ENCODE measurements at regions of chr17 and their contacts with region 1.

Region 1: DNA sequence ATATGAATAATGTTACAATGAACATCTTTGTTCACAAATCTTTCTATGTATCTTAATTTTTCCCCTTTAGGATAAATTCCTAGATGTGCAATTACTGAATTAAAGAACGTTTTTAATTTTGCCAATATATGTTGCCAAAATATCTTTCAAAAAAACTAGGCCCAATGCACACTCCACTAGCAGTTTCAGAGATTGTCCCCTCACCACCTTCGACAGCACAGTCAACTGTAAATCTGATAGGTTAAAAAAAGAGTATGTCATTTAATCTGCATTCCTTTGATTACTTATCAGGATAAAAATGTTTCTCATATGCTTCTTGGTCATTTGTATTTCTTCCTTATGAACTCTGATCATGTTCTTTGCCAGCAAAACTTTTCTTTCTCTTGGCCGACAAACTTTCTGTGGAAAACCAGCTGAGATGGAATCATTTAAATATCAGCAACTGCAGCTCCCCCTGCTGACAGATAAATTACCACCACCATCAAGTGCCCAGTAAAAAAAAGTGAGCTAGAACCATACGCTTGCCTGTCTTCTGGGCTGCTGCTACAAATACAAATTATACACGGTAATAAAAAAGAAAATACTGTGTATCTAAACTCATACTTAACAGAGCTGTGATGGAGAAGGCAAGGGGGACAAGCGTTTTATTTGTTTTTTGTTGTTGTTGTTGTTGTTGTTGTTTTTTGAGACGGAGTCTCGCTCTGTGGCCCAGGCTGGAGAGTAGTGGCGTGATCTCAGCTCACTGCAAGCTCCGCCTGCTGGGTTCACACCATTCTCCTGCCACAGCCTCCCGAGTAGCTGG is 19.6 kb upstream of the KANSL1 start:
- DNase-seq: peak; percentile 71
- ATAC-seq: peak; percentile 87
- H3K4me3 Mint-ChIP-seq: no peak overlapping the region
- H3K27ac Mint-ChIP-seq: no peak overlapping the region
- H3K4me1 Mint-ChIP-seq: peaks cover 17% of the 10 kb centered on the region
- H3K27me3 Mint-ChIP-seq: no peaks in the 10 kb centered on the region

Region 2: DNA sequence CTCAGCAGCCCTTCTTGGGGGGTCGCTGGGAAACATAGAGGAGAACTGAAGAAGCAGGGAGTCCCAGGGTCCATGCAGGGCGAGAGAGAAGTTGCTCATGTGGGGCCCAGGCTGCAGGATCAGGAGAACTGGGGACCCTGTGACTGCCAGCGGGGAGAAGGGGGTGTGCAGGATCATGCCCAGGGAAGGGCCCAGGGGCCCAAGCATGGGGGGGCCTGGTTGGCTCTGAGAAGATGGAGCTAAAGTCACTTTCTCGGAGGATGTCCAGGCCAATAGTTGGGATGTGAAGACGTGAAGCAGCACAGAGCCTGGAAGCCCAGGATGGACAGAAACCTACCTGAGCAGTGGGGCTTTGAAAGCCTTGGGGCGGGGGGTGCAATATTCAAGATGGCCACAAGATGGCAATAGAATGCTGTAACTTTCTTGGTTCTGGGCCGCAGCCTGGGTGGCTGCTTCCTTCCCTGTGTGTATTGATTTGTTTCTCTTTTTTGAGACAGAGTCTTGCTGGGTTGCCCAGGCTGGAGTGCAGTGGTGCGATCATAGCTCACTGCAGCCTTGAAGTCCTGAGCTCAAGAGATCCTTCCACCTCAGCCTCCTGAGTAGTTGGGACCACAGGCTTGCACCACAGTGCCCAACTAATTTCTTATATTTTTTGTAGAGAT is 210.4 kb before region 1 on chr17:
- CTCF ChIA-PET with region 1: interaction called, 24 read pairs
- DNase-seq: peak; percentile 80
- ATAC-seq: peak; percentile 94
- H3K4me3 Mint-ChIP-seq: no peak overlapping the region
- H3K27ac Mint-ChIP-seq: no peak overlapping the region
- H3K4me1 Mint-ChIP-seq: peaks cover 3% of the 10 kb centered on the region
- H3K27me3 Mint-ChIP-seq: no peaks in the 10 kb centered on the region

Region 3: DNA sequence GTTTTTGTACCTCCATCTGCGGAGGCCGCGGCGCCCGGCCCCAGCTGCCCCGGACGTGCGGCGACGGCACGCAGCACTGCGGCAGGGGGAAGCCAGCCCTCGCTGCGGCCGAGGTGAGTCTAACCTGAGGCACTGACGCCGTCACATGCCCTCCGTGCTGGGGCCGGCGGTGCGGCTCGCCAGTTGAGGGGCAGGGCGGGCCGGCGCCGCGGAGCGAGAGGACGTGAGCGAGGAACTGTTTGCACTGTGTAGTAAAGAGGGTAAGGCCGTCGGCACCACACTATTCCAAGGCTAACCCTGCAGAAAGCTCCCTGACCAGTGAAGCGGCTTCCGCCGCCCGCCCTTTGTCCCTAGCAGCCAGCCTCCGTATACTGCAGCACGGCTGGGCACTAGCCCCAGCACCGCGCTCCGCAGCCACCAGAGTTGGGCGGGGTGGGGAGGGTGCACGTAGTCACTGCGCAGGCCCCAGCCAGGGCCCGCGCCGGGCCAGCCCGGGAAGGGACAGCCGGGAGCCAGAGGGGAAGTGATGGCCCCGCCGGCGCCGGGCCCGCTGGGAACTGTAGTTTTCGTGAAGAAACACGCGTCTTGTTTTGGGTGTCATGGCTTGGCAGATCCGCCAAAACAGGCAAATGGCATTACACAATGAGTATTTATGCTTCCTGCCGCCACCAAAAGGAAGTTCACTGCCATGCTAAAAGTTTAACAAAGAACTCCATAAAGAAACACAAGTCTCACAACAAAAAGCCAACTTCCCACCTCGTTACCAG is 19.0 kb before region 1 on chr17:
- CTCF ChIA-PET with region 1: interaction called, 55 read pairs
- DNase-seq: peak; percentile 97
- ATAC-seq: peak; percentile 74
- H3K4me3 Mint-ChIP-seq: peak overlapping the region; percentile 85
- H3K27ac Mint-ChIP-seq: peak overlapping the region; percentile 98
- H3K4me1 Mint-ChIP-seq: peaks cover 62% of the 10 kb centered on the region
- H3K27me3 Mint-ChIP-seq: no peaks in the 10 kb centered on the region

Region 4: GRCh38 chr17:46199379-46199778 is 13.5 kb before region 1 on chr17:
- CTCF ChIA-PET with region 1: interaction called, 55 read pairs
- DNase-seq: no peak
- ATAC-seq: no peak
- H3K4me3 Mint-ChIP-seq: no peak overlapping the region
- H3K27ac Mint-ChIP-seq: no peak overlapping the region
- H3K4me1 Mint-ChIP-seq: peaks cover 52% of the 10 kb centered on the region
- H3K27me3 Mint-ChIP-seq: no peaks in the 10 kb centered on the region

Measured in activated CD8-positive, alpha-beta memory T cell treated with anti-CD3 and anti-CD28 coated beads, Interleukin-2, amount 10 ng/mL, durations not matched to agents 7 days and 5 days (primary cell).